Heart left ventricle (tissue), 16 donors: ENCODE measurements at regions of chr1 and their contacts with region 1.

Region 1: DNA sequence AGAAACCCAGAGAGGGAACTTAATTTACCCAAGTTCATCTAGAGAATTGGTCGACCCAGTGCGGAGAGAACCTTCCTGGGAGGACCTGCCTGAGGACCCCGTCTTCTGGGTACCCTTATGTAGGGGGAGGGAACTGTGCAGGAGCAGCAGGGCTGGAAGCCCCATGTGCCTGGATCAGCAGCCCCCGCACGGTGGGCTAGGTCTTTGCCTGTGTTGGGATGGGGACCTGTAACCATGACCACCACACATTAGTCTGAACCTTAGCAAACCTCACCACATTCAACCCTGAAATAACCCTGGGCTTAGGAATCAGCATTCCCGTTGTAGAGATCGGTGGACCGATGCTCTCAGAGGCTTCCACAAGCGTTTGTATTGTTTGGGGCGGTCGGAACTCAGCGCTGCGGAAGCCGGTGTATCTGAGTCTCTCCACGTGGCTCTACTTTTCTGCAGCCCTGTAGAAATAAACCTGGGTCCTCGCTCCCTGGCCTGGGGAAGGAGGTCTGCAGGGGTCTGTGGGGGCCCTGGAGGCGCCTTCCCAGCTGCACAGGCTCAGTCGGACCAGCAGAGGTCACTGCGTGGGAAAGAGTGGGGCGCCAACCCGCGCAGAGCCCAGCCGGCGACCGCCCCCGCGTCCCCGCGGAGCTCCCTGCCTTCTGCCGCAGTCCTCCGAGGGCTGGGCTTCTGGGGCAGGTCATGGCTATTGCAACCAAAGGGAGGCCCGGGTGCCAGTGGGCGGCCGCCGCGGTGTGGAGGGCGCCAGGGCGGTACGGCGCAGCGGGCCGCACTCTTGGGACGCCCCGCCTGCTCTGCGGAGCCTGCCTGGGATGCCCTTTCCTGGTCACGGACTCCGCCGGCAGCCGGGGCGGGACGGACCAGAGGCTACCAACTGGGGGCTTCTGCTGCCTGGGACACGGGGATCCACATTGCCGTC is 36.2 kb upstream of the KCNA10 start:
- DNase-seq: peak; percentile 44 to 77 (median 60)
- ATAC-seq: peak; percentile 47 to 89 (median 84)
- H3K4me3 ChIP-seq: peak overlapping the region in 10 of 12 donors; percentile 7 to 58 (median 49)
- H3K27ac ChIP-seq: peak overlapping the region in 5 of 12 donors; percentile 11 to 48 (median 36)
- H3K4me1 ChIP-seq: peaks cover 0 to 22% (median 13%) of the 10 kb centered on the region in 12 donors
- H3K27me3 ChIP-seq: peaks cover 0 to 44% (median 7%) of the 10 kb centered on the region in 9 donors
- CTCF ChIP-seq: peak; percentile 66 to 86 (median 78)
- POLR2A ChIP-seq: no peak

Region 2: GRCh38 chr1:110477445-110477957 is 77.6 kb before region 1 on chr1:
- intact Hi-C with region 1: no loop called
- DNase-seq: no peak
- ATAC-seq: peak in 3 of 4 donors; percentile 33 to 49 (median 37)
- H3K4me3 ChIP-seq: no peak overlapping the region
- H3K27ac ChIP-seq: no peak overlapping the region
- H3K4me1 ChIP-seq: peaks cover 0 to 22% (median 7%) of the 10 kb centered on the region in 12 donors
- H3K27me3 ChIP-seq: no peaks in the 10 kb centered on the region
- CTCF ChIP-seq: peak in 1 of 12 donors; percentile 10
- POLR2A ChIP-seq: no peak

Region 3: GRCh38 chr1:110605901-110606656 is 50.9 kb after region 1 on chr1 and contains the start of gene KCNA2:
- intact Hi-C with region 1: loop called in 3 of 10 experiments (anchors 5 kb)
- DNase-seq: peak; percentile 44 to 81 (median 50)
- ATAC-seq: peak in 3 of 4 donors; percentile 72 to 81 (median 80)
- H3K4me3 ChIP-seq: peak within 1 kb of the TSS; percentile 45 to 73 (median 61)
- H3K27ac ChIP-seq: peak within 1 kb of the TSS in 8 of 12 donors; percentile 25 to 70 (median 50)
- H3K4me1 ChIP-seq: peaks cover 0 to 31% (median 14%) of the 10 kb centered on the region in 12 donors
- H3K27me3 ChIP-seq: peaks cover 5 to 92% (median 32%) of the 10 kb centered on the region in 9 donors
- CTCF ChIP-seq: no peak
- POLR2A ChIP-seq: no peak
- total RNA-seq, gene KCNA2: 0.23 to 1.6 (median 0.82) TPM

Region 4: GRCh38 chr1:110612065-110612751 is 57.1 kb after region 1 on chr1:
- intact Hi-C with region 1: loop called in 9 of 10 experiments (anchors 1 to 5 kb)
- DNase-seq: no peak
- ATAC-seq: no peak
- H3K4me3 ChIP-seq: no peak overlapping the region
- H3K27ac ChIP-seq: no peak overlapping the region
- H3K4me1 ChIP-seq: peaks cover 0 to 14% (median 2%) of the 10 kb centered on the region in 12 donors
- H3K27me3 ChIP-seq: peaks cover 0 to 86% (median 29%) of the 10 kb centered on the region in 9 donors
- CTCF ChIP-seq: no peak
- POLR2A ChIP-seq: no peak

Region 5: DNA sequence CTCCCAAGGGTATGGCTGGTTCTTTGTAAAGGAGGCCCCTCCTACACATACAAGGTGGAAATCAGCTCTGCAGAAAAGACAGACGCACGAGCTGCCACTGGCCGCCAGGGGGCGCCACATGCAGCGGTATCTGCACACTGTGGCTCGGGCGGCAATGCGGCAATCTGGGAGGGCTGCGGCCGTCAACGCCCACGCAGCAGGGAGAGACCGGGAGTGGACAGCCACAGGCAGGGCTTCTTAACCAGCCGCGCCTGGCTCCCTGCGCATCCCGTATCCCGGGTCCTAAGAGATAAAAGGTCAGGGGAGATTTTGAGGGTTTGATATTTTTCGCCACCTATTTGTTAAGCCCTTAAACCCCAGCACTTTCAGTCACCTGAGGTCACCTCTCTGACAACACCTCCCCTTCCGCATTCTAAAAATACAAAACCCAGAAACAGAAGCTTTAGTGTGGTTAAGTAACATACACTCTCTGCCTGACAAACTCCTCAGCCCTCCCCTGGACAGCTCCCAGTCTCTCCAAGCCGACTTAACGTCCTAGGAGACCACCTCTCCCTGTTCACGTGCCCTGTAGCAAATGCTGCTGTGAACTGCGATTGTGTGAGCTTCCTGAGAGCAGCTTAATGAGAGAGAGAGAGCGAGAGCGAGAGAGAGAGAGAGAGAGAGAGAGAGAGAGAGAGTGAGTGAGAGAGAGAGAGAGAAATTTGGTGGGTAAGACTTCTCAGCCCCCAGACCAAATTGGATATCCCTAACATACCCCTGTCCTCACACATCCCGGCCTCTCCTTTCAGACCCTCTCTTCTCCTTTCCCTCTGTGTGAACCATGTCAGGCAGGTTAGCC is 64.5 kb after region 1 on chr1:
- intact Hi-C with region 1: loop called in 8 of 10 experiments (anchors 1 to 5 kb)
- DNase-seq: peak; percentile 82 to 93 (median 87)
- ATAC-seq: peak; percentile 60 to 92 (median 89)
- H3K4me3 ChIP-seq: peak overlapping the region in 4 of 12 donors; percentile 14 to 50 (median 26)
- H3K27ac ChIP-seq: no peak overlapping the region
- H3K4me1 ChIP-seq: peaks cover 0 to 17% (median 7%) of the 10 kb centered on the region in 12 donors
- H3K27me3 ChIP-seq: peaks cover 0 to 44% (median 21%) of the 10 kb centered on the region in 9 donors
- CTCF ChIP-seq: peak; percentile 80 to 98 (median 94)
- POLR2A ChIP-seq: no peak

Region 6: DNA sequence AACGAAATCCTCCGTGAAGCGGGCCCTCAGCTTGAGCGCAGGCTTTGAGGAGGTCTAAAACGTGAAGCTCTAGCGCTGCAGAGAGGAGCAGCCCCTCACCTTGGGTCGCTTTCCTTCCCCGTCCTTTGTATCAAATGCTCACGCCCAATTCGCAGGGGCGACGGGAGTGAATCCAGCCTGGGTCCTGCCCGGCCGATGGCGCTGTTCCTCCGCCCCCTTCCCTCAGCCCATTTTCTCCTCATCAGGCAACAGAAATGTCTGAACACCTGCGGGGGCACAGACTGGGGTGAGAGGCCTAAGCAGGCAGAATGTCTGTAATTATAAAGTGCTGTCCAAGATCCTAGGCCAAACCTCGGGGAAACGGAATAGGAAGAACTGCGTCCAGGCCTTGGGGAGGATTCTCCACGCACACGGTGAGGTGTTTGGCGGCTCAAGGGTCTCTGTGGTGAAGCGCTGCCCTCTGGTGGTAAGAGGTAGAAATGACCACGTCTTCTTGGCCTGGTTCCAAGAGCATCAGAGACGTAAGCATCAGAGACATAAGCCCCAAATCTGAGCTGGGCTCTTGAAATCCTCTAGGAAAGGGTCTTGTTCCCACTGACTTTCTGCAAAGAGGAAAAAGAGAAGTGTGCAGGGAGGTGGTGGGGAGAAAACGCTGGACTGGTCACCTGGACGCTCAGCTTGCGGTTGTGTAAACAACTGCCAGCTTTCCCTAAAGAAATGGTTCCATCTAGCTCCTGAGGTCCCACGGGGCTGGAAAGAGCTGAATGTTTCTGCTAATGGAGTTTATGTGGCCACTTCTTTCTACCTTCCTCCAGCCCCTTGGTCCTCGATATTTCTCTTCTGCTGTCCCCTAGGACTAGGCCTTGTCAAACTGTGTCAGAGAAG is 225.7 kb after region 1 on chr1:
- intact Hi-C with region 1: loop called in 2 of 10 experiments (anchors 10 kb)
- DNase-seq: peak in 4 of 5 donors; percentile 46 to 62 (median 55)
- ATAC-seq: peak in 3 of 4 donors; percentile 47 to 72 (median 69)
- H3K4me3 ChIP-seq: no peak overlapping the region
- H3K27ac ChIP-seq: no peak overlapping the region
- H3K4me1 ChIP-seq: peaks cover 0 to 17% (median 0%) of the 10 kb centered on the region in 12 donors
- H3K27me3 ChIP-seq: peaks cover 0 to 31% (median 3%) of the 10 kb centered on the region in 9 donors
- CTCF ChIP-seq: peak; percentile 73 to 90 (median 80)
- POLR2A ChIP-seq: no peak